Activated CD8-positive, alpha-beta T cell treated with anti-CD3 and anti-CD28 coated beads for 36 hours (primary cell): ENCODE measurements at regions of chr3 and their contacts with region 1.

Region 1: GRCh38 chr3:130539005-130539404 is 22.0 kb downstream of the COL6A6 start:
- DNase-seq: peak; percentile 59
- ATAC-seq: peak; percentile 39
- H3K4me3 Mint-ChIP-seq: no peak overlapping the region
- H3K27ac Mint-ChIP-seq: no peak overlapping the region
- H3K4me1 Mint-ChIP-seq: no peaks in the 10 kb centered on the region
- H3K27me3 Mint-ChIP-seq: peaks cover 8% of the 10 kb centered on the region
- CTCF ChIP-seq: peak; percentile 54

Region 2: GRCh38 chr3:130276203-130276803 is 262.7 kb before region 1 on chr3:
- CTCF ChIA-PET with region 1: interaction called, 14 read pairs
- POLR2A ChIA-PET with region 1: no interaction called
- intact Hi-C with region 1: loop called (anchors 2 kb)
- DNase-seq: peak; percentile 18
- ATAC-seq: peak; percentile 62
- H3K4me3 Mint-ChIP-seq: no peak overlapping the region
- H3K27ac Mint-ChIP-seq: no peak overlapping the region
- H3K4me1 Mint-ChIP-seq: no peaks in the 10 kb centered on the region
- H3K27me3 Mint-ChIP-seq: peaks cover 15% of the 10 kb centered on the region
- CTCF ChIP-seq: peak; percentile 86

Region 3: DNA sequence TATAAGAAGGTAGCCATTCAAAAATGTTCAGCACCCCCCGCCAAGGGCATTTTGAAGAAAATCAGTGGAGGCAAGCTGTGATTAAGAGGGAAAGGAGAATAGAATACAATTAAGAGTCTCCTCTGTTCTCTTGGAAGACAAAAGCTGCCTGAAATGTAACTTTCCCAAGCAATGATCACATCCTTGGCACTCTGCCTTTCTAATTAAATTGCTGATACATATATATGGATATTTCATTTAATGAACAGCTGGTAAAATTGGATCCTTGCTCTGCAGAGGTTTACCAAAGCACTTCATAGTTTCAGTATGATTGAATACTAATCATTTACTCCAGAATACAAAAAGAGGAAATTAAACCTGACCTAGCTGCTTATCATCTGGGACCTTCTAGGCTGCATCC is 11.6 kb before region 1 on chr3:
- CTCF ChIA-PET with region 1: interaction called, 12 read pairs
- POLR2A ChIA-PET with region 1: no interaction called
- intact Hi-C with region 1: no loop called
- DNase-seq: no peak
- ATAC-seq: no peak
- H3K4me3 Mint-ChIP-seq: no peak overlapping the region
- H3K27ac Mint-ChIP-seq: no peak overlapping the region
- H3K4me1 Mint-ChIP-seq: peaks cover 10% of the 10 kb centered on the region
- H3K27me3 Mint-ChIP-seq: peaks cover 16% of the 10 kb centered on the region
- CTCF ChIP-seq: no peak